ENCODE measurements at regions of chr9 and their contacts with region 1.

Region 1: GRCh38 chr9:76297721-76298239 is 96.4 kb downstream of the RFK start:
- DNase-seq: peak; percentile 39 to 55 (median 50)
- H3K4me3 ChIP-seq: no peak overlapping the region
- H3K27ac ChIP-seq: peak overlapping the region; percentile 51 to 77
- H3K4me1 ChIP-seq: peaks cover 5% of the 10 kb centered on the region
- H3K27me3 ChIP-seq: no peaks in the 10 kb centered on the region
- CTCF ChIP-seq: no peak
- EP300 ChIP-seq: no peak
- POLR2A ChIP-seq: no peak

Region 2: GRCh38 chr9:76086539-76086938 is 211.2 kb before region 1 on chr9:
- intact Hi-C with region 1: loop called in 1 of 4 experiments (anchors 10 kb)
- DNase-seq: no peak
- H3K4me3 ChIP-seq: no peak overlapping the region
- H3K27ac ChIP-seq: no peak overlapping the region
- H3K4me1 ChIP-seq: no peaks in the 10 kb centered on the region
- H3K27me3 ChIP-seq: no peaks in the 10 kb centered on the region
- CTCF ChIP-seq: no peak
- EP300 ChIP-seq: no peak
- POLR2A ChIP-seq: no peak